Endothelial cell of umbilical vein (primary cell): ENCODE measurements at regions of chr18 and their contacts with region 1.

Region 1: DNA sequence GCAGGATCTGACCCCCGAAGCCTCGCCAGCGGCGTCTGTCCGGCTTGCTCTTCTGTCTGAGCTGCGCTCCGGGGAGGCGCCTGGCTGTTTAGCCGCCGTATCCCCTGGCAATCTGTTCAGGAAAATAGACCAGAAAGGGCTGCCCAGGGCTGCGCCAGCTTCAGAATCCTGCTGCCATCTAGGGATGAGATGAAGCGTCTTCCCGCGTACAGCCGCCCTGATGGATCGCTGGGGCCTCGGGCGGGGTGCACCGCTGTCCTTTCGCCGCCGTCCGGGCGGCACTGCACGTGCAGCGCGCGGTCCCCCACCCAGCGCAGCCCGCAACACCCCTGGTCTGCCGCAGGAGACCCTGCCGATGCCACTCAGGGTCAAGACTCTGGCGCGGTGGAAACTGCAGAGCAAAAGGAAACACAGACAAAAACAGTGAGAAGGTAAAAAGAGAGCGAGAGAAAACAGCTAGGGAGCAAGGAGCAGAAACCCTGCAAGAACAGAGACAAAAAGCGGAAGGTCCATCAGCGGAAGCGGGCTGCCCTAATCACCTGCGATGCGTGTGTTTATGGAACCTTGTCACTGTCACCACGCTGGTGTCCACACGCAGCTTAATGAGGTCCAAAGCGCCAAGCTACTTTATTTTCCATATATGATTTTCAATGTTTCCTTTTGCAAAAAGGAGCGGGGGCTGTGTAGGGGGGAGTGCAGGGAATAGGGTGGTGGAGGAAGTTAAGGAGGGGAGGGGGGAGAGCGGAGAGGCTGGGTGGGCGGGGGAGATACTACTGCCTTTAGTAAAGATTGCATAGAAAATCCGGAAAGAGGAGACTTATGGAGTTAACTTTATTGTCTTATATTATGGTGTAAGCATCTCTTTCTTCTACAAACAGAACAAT is 2113.3 kb upstream of the PIK3C3 start:
- DNase-seq: peak; percentile 76
- H3K4me3 ChIP-seq: peak overlapping the region in 2 of 3 experiments; percentile 24 to 44
- H3K27ac ChIP-seq: no peak overlapping the region
- H3K4me1 ChIP-seq: peaks cover 27% of the 10 kb centered on the region
- H3K27me3 ChIP-seq: no peaks in the 10 kb centered on the region
- CTCF ChIP-seq: peak; percentile 39 to 63
- POLR2A ChIP-seq: no peak

Region 2: DNA sequence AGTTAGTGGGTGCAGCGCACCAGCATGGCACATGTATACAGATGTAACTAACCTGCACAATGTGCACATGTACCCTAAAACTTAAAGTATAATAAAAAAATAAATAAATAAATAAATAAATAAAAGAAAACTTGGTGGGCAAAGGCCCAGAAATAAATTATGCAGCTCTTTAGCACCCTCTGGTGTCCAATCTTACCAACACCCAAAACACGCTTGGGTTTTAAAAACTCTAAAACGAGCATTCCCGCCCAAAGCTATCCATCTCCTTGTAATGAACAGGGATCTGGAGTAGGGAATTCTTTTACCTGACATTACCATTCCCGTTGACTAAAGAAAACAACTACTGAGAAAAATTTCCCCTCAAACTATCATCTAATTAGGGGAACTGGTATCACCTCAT is 270.2 kb before region 1 on chr18:
- CTCF ChIA-PET with region 1: interaction called, 8 read pairs
- POLR2A ChIA-PET with region 1: no interaction called
- dilution Hi-C with region 1: no loop called
- intact Hi-C with region 1: loop called (anchors 10 kb)
- DNase-seq: peak; percentile 39
- H3K4me3 ChIP-seq: no peak overlapping the region
- H3K27ac ChIP-seq: no peak overlapping the region
- H3K4me1 ChIP-seq: no peaks in the 10 kb centered on the region
- H3K27me3 ChIP-seq: no peaks in the 10 kb centered on the region
- CTCF ChIP-seq: peak; percentile 19 to 28
- POLR2A ChIP-seq: no peak

Region 3: DNA sequence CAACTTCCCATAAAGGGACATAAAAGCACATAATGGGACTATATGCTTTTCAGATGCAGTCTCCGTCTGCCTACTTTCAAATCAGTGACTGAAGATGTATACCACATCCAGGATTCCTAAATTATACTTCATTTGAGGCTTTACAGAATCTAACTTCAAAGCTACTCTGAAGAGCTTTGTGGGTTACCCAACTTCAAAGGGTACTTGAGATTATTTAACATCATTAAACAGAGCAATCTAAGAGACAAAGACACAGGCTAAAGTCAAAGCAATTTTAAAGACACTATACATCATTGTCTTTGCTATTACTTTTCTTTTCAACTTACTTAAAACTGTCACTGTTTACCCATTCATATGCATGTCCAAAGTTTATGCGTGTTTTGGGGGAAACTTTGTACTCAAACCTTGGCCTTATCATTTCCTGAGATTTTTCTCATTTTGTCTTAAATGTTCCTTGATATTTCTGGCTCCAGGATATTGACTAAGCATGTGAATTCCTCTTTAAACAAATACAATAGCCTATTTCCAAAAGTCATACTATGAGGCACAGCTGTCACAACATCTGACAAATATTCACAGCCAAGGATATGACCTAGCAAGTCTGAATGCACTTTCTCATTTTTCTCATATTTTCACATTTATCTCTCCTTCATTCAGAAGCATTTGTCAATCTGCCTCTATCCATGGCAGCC is 128.2 kb after region 1 on chr18:
- CTCF ChIA-PET with region 1: no interaction called
- POLR2A ChIA-PET with region 1: no interaction called
- dilution Hi-C with region 1: no loop called
- intact Hi-C with region 1: loop called (anchors 2 kb)
- DNase-seq: peak; percentile 97
- H3K4me3 ChIP-seq: peak overlapping the region in 1 of 3 experiments; percentile 78
- H3K27ac ChIP-seq: peak overlapping the region; percentile 98
- H3K4me1 ChIP-seq: peaks cover 30% of the 10 kb centered on the region
- H3K27me3 ChIP-seq: no peaks in the 10 kb centered on the region
- CTCF ChIP-seq: no peak
- POLR2A ChIP-seq: peak; percentile 69

Region 4: DNA sequence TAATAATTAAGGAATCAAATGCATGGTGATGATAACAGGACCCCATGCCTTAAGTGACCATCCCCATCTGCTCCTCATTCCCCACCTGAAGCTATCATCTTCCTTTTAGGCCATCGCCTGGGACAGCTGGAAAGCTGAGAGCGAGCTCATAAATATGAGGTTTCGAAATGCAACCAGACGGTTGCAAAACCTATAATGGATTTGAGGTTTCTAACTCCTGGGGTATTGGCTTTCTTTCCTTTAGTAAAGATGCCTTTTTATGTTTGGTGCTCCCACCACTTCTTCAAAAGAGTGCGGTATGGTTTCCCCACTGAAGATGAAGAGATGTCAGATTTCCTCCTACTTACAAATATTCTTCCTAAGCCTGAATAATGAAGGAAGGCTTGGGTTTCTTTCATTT is 523.8 kb after region 1 on chr18:
- CTCF ChIA-PET with region 1: no interaction called
- POLR2A ChIA-PET with region 1: no interaction called
- dilution Hi-C with region 1: no loop called
- intact Hi-C with region 1: loop called (anchors 2 kb)
- DNase-seq: no peak
- H3K4me3 ChIP-seq: no peak overlapping the region
- H3K27ac ChIP-seq: peak overlapping the region; percentile 52
- H3K4me1 ChIP-seq: peaks cover 36% of the 10 kb centered on the region
- H3K27me3 ChIP-seq: no peaks in the 10 kb centered on the region
- CTCF ChIP-seq: no peak
- POLR2A ChIP-seq: no peak